Activated T-helper 2 cell treated with anti-CD3 and anti-CD28 coated beads, Interferon-gamma antibody, Interleukin-2, Interleukin-4, amounts not matched to agents 10 μg/mL and 5 μg/mL and 100 μg/mL, durations not matched to agents 14 hours and 24 hours and 36 hours (primary cell): ENCODE measurements at regions of chr5 and their contacts with region 1.

Region 1: DNA sequence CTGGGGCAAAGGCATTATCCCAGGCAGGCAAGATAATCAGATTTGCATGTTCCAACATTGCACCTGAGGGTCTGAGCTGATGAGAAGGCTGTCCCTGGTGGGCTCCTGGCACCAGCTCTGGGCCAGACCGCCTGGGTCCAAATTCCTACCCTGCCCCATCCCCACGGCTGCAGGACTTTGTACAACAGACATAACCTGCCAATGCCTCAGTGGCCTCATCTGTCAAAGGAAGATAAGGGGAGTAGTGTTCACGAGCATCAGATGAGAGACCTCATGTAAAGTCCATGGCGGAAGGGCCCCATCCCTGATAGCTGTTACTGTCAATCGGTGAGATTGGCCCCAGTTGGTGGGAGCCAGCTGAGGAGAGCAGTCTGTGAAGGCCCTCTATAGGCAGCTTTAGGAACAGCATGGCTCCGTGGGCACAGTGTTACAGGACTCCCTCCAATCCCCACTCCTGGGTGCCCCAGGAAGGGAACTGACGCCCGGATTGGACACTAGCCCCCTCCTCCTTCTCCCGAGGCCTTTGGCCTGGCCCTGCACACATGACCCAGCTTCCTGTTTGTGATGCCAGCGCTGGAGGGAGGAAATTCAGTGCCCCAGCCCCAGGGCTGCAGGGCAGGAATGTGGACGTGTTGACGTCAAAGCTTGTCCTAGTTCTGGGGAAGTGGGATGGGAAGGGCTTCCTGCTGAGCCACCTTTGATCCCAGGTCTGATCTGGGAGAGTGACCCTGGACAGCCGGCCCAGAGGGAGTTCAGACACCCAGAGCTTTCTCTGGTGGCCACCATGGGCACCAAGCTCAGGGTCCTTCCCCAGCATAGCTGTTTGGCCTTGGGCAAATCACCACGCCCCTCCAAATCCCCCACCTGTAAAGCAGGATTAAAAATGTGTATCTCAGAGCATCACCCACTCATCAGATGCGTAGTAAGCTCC is 56.2 kb downstream of the DUSP1 start:
- DNase-seq: peak; percentile 48
- H3K4me3 Mint-ChIP-seq: no peak overlapping the region
- H3K27ac Mint-ChIP-seq: no peak overlapping the region
- H3K4me1 Mint-ChIP-seq: peaks cover 2% of the 10 kb centered on the region
- H3K27me3 Mint-ChIP-seq: no peaks in the 10 kb centered on the region

Region 2: DNA sequence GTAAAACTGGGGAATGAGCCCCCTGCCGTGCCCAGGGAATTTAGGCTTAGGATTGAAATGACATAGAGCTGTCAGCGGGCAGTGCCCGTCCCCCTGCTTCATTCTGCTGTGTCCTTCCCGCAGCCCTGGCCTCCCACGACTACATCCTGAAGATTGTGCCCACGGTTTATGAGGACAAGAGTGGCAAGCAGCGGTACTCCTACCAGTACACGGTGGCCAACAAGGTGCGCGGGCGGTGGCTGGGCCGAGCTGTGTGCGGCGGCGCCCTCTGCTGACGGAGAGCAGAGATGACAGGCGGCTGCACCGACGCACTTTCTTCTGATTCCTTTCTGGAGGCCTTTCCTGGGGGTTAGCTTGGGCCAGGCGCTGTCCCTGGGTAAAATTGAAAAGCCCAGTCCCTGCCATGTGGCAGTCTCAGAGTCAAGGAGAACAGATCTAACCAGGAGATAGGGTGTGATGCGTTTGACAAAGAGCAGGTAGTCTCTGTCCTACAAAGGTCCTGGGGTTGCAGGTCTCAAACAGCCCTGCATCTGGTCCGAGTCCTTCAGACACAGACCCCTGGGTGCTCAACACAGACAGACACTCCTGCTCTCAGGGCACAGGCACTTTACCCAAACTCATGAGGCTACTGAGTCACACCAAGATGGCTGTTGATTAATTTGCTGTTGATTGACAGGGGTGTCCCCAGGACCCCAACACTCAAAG is 217.7 kb after region 1 on chr5:
- intact Hi-C with region 1: loop called (anchors 1 kb)
- DNase-seq: peak; percentile 59
- H3K4me3 Mint-ChIP-seq: no peak overlapping the region
- H3K27ac Mint-ChIP-seq: no peak overlapping the region
- H3K4me1 Mint-ChIP-seq: no peaks in the 10 kb centered on the region
- H3K27me3 Mint-ChIP-seq: no peaks in the 10 kb centered on the region